ENCODE measurements at regions of chr17 and their contacts with region 1.

Region 1: GRCh38 chr17:28967221-28968140 is 16.2 kb upstream of the PHF12 start:
- DNase-seq: peak in 2 of 3 donors; percentile 55 to 64
- H3K4me3 ChIP-seq: no peak overlapping the region
- H3K27ac ChIP-seq: no peak overlapping the region
- H3K4me1 ChIP-seq: peaks cover 0 to 10% (median 1%) of the 10 kb centered on the region in 4 experiments
- H3K27me3 ChIP-seq: peaks cover 0 to 9% (median 0%) of the 10 kb centered on the region in 5 experiments

Region 2: GRCh38 chr17:28978356-28978964 is 11.0 kb after region 1 on chr17:
- CTCF ChIA-PET with region 1: interaction called, 16 read pairs
- POLR2A ChIA-PET with region 1: no interaction called
- DNase-seq: no peak
- H3K4me3 ChIP-seq: no peak overlapping the region
- H3K27ac ChIP-seq: no peak overlapping the region
- H3K4me1 ChIP-seq: peaks cover 3 to 24% (median 20%) of the 10 kb centered on the region in 4 experiments
- H3K27me3 ChIP-seq: peaks cover 0 to 5% (median 0%) of the 10 kb centered on the region in 5 experiments

Region 3: GRCh38 chr17:29019475-29020181 is 52.1 kb after region 1 on chr17:
- CTCF ChIA-PET with region 1: interaction called, 11 read pairs
- POLR2A ChIA-PET with region 1: no interaction called
- DNase-seq: peak in 1 of 3 donors; percentile 21
- H3K4me3 ChIP-seq: peak overlapping the region in 5 of 7 experiments; percentile 4 to 64 (median 31)
- H3K27ac ChIP-seq: no peak overlapping the region
- H3K4me1 ChIP-seq: peaks cover 4 to 28% (median 27%) of the 10 kb centered on the region in 4 experiments
- H3K27me3 ChIP-seq: peaks cover 0 to 36% (median 21%) of the 10 kb centered on the region in 5 experiments

Region 4: DNA sequence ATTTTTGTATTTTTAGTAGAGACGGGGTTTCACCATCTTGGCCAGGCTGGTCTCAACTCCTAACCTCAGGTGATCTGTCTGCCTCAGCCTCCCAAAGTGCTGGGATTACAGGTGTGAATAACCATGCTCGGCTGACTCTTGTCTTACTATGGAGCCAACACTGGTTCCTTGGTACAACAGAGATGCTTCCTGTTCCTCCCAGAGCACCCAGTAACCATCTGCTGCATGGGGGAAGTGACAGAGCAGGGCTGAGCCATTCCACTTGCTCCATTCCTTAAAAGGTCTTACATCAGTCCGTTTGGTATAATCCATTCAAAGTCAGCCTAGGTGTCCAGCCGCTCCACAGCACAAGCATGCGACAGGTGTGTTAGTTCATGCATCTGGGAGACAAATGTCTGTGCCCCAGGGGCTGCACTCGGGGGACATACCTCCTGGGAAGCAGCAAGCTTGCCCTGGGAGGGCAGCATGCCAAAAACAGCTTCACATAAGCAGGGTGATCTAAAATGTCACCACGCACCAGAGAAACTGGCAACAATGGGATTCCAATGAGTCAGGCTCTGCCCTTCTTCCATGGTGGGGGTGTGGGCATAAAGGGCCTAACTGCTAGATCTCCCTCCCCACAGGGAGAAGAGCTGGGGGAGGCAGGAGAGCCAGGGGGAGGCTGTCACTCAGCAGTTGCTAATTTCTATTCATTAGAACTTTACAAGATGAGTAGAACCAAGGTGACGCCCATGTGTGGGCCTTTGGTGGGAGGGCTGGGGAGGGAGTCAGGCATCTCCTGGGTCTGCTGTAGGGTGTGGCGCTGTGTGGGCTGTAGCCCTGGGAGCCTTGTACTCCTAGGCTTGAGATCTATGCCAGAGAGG is 110.9 kb after region 1 on chr17:
- CTCF ChIA-PET with region 1: interaction called, 13 read pairs
- POLR2A ChIA-PET with region 1: no interaction called
- DNase-seq: no peak
- H3K4me3 ChIP-seq: no peak overlapping the region
- H3K27ac ChIP-seq: no peak overlapping the region
- H3K4me1 ChIP-seq: no peaks in the 10 kb centered on the region
- H3K27me3 ChIP-seq: no peaks in the 10 kb centered on the region

Region 5: DNA sequence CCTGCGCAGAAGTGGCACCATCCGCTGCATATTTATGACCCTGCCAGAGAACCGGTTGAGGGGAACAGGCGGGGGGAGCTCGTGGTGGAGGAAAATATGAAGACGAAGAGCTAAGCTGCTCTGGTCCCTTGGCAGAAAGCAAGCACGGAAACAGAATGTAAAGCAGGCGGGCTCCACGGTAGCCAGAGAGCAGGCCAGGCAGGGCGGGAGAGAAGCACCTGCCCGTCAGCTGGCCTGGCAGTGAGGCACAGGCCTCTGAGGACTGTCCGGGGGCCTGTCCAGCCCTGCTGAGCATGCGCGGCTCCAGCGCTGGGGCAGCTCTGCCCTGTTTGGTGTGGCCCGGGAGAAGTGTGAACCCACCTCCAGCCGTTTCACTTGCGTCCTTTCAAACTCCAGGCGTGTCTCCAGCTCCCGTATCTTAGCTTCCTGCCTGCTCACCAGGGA is 122.1 kb after region 1 on chr17:
- CTCF ChIA-PET with region 1: interaction called, 21 read pairs
- POLR2A ChIA-PET with region 1: no interaction called
- DNase-seq: no peak
- H3K4me3 ChIP-seq: no peak overlapping the region
- H3K27ac ChIP-seq: peak overlapping the region; percentile 14 to 33
- H3K4me1 ChIP-seq: no peaks in the 10 kb centered on the region
- H3K27me3 ChIP-seq: no peaks in the 10 kb centered on the region

Region 6: GRCh38 chr17:29111816-29112499 is 144.5 kb after region 1 on chr17:
- CTCF ChIA-PET with region 1: interaction called, 236 read pairs
- POLR2A ChIA-PET with region 1: interaction called, 4 read pairs
- DNase-seq: peak; percentile 48 to 66 (median 58)
- H3K4me3 ChIP-seq: no peak overlapping the region
- H3K27ac ChIP-seq: peak overlapping the region in 1 of 2 experiments; percentile 39
- H3K4me1 ChIP-seq: peaks cover 0 to 8% (median 0%) of the 10 kb centered on the region in 4 experiments
- H3K27me3 ChIP-seq: no peaks in the 10 kb centered on the region

Region 7: GRCh38 chr17:29116804-29117772 is 149.6 kb after region 1 on chr17:
- CTCF ChIA-PET with region 1: interaction called, 236 read pairs
- POLR2A ChIA-PET with region 1: interaction called, 8 read pairs
- DNase-seq: peak; percentile 58 to 75 (median 68)
- H3K4me3 ChIP-seq: no peak overlapping the region
- H3K27ac ChIP-seq: no peak overlapping the region
- H3K4me1 ChIP-seq: no peaks in the 10 kb centered on the region
- H3K27me3 ChIP-seq: no peaks in the 10 kb centered on the region